IMR-90 (cell line): ENCODE measurements at regions of chr10 and their contacts with region 1.

Region 1: GRCh38 chr10:112775381-112775780 is 174.7 kb upstream of the TCF7L2 start:
- DNase-seq: peak; percentile 46
- ATAC-seq: peak; percentile 62
- H3K4me3 ChIP-seq: no peak overlapping the region
- H3K27ac ChIP-seq: no peak overlapping the region
- H3K4me1 ChIP-seq: no peaks in the 10 kb centered on the region; the same call in 1 of the 2 replicates
- H3K27me3 ChIP-seq: no peaks in the 10 kb centered on the region
- CTCF ChIP-seq: peak; percentile 43
- POLR2A ChIP-seq: no peak
- RAD21 ChIP-seq: peak; percentile 15; the same call in 1 of the 2 replicates

Region 2: DNA sequence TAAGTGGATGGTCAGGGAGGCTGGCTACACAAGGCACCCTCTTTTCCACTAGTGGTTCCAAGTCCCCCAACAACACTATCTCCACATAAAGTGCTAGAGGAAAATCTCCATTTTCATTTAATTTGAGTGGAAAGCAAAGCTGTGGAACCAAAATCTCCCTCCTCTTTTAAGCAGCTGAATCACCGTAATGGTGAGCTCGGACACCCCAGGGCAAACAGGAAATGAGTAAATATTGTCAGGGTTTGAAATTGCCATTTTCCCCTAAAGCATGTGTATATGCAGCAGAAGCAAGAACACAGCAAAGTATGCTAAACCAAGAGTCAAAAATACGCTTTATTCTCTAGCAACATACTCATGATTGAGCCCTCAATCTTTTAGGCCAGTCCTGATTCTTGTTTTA is 735.6 kb before region 1 on chr10:
- CTCF ChIA-PET with region 1: no interaction called
- POLR2A ChIA-PET with region 1: no interaction called
- dilution Hi-C with region 1: no loop called
- in situ Hi-C with region 1: no loop called
- intact Hi-C with region 1: no loop called
- DNase-seq: no peak
- ATAC-seq: no peak
- H3K4me3 ChIP-seq: no peak overlapping the region
- H3K27ac ChIP-seq: no peak overlapping the region
- H3K4me1 ChIP-seq: no peaks in the 10 kb centered on the region
- H3K27me3 ChIP-seq: no peaks in the 10 kb centered on the region
- CTCF ChIP-seq: no peak
- POLR2A ChIP-seq: no peak
- RAD21 ChIP-seq: no peak

Region 3: GRCh38 chr10:112792487-112793201 is 17.3 kb after region 1 on chr10:
- CTCF ChIA-PET with region 1: no interaction called
- POLR2A ChIA-PET with region 1: no interaction called
- dilution Hi-C with region 1: no loop called
- in situ Hi-C with region 1: no loop called
- intact Hi-C with region 1: loop called (anchors 2 kb)
- DNase-seq: peak; percentile 56
- ATAC-seq: peak; percentile 94
- H3K4me3 ChIP-seq: no peak overlapping the region
- H3K27ac ChIP-seq: no peak overlapping the region
- H3K4me1 ChIP-seq: peaks cover 8% of the 10 kb centered on the region
- H3K27me3 ChIP-seq: no peaks in the 10 kb centered on the region
- CTCF ChIP-seq: no peak
- POLR2A ChIP-seq: no peak
- RAD21 ChIP-seq: no peak

Region 4: GRCh38 chr10:112977426-112977898 is 202.1 kb after region 1 on chr10:
- CTCF ChIA-PET with region 1: no interaction called
- POLR2A ChIA-PET with region 1: interaction called, 13 read pairs
- dilution Hi-C with region 1: no loop called
- in situ Hi-C with region 1: no loop called
- intact Hi-C with region 1: no loop called
- DNase-seq: no peak
- ATAC-seq: no peak
- H3K4me3 ChIP-seq: no peak overlapping the region
- H3K27ac ChIP-seq: no peak overlapping the region
- H3K4me1 ChIP-seq: no peaks in the 10 kb centered on the region; the same call in 1 of the 2 replicates
- H3K27me3 ChIP-seq: no peaks in the 10 kb centered on the region
- CTCF ChIP-seq: no peak
- POLR2A ChIP-seq: no peak
- RAD21 ChIP-seq: no peak